Activated CD8-positive, alpha-beta memory T cell treated with anti-CD3 and anti-CD28 coated beads, Interleukin-2, amount 10 ng/mL, durations not matched to agents 7 days and 5 days (primary cell): ENCODE measurements at regions of chr20 and their contacts with region 1.

Region 1: DNA sequence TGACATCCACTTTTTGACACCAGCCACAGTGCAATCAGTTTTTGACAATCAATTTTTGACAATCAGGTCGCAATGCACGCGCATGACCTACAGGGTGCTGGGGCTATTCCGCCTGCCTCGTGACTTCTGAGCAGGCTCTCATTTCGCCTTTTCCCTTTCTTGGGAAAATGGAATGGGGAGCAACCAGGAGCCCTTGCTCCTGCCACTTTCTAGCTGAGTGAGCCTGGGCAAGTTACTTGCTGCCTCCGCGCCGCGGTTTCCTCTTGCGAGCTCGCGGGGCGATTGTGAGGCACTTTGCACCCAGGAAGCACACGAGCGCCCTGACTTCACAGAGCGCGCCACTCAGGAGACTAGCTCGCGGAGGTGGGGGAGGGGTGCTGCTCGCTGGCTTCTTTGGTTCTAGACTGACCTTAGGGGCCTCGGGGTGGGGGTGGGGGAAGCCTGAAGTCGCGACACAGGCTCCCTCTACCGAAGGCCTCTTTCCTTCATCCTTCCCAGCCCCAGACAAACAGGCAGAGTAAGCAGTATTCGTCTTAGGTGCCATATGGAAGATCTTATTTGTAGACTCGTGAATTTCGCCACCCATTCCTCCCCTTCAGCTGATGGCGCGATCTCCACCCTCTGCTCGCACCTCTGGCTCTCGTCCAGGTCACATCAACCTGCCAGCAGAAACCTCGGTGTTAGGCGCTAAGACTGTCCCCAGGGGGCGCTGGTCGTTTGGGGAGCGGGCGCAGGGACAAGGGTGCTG is 4.6 kb downstream of the TP53TG5 start:
- DNase-seq: peak; percentile 92
- ATAC-seq: peak; percentile 95
- H3K4me3 Mint-ChIP-seq: peak overlapping the region; percentile 78
- H3K27ac Mint-ChIP-seq: peak overlapping the region; percentile 90
- H3K4me1 Mint-ChIP-seq: peaks cover 27% of the 10 kb centered on the region
- H3K27me3 Mint-ChIP-seq: no peaks in the 10 kb centered on the region

Region 2: GRCh38 chr20:45300961-45301360 is 72.6 kb before region 1 on chr20:
- CTCF ChIA-PET with region 1: no interaction called
- DNase-seq: peak; percentile 75
- ATAC-seq: peak; percentile 69
- H3K4me3 Mint-ChIP-seq: no peak overlapping the region
- H3K27ac Mint-ChIP-seq: no peak overlapping the region
- H3K4me1 Mint-ChIP-seq: peaks cover 42% of the 10 kb centered on the region
- H3K27me3 Mint-ChIP-seq: peaks cover 29% of the 10 kb centered on the region

Region 3: DNA sequence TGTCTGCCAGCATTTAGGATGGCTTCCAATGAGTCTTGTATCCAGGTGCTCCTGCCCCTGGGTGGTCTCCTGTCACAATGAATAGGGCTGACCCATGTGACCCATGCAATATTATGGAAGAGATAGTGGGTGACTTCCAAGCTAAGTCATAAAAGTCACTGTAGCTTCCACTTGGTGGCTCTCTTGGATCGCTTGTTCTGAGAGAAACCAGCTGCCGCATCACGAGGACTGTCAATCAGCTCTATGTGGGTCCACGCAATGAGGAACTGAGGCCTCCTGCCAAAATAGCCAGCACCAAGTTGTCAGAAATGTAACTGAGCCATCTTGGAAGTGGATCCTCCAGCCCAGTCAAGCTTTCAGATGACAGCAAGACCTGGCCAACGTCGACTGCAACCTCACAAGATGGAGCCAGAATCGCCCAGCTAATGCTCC is 50.6 kb before region 1 on chr20:
- CTCF ChIA-PET with region 1: interaction called, 33 read pairs
- DNase-seq: no peak
- ATAC-seq: no peak
- H3K4me3 Mint-ChIP-seq: no peak overlapping the region
- H3K27ac Mint-ChIP-seq: no peak overlapping the region
- H3K4me1 Mint-ChIP-seq: peaks cover 35% of the 10 kb centered on the region
- H3K27me3 Mint-ChIP-seq: no peaks in the 10 kb centered on the region

Region 4: GRCh38 chr20:45362804-45363610 is 10.5 kb before region 1 on chr20 and contains the start of gene SYS1:
- CTCF ChIA-PET with region 1: interaction called, 127 read pairs
- DNase-seq: peak; percentile 99
- ATAC-seq: peak; percentile 92
- H3K4me3 Mint-ChIP-seq: peak within 1 kb of the TSS; percentile 100
- H3K27ac Mint-ChIP-seq: peak within 1 kb of the TSS; percentile 97
- H3K4me1 Mint-ChIP-seq: peaks cover 52% of the 10 kb centered on the region
- H3K27me3 Mint-ChIP-seq: peaks cover 3% of the 10 kb centered on the region
- total RNA-seq, gene SYS1: 19.6 to 24.9 TPM

Region 5: DNA sequence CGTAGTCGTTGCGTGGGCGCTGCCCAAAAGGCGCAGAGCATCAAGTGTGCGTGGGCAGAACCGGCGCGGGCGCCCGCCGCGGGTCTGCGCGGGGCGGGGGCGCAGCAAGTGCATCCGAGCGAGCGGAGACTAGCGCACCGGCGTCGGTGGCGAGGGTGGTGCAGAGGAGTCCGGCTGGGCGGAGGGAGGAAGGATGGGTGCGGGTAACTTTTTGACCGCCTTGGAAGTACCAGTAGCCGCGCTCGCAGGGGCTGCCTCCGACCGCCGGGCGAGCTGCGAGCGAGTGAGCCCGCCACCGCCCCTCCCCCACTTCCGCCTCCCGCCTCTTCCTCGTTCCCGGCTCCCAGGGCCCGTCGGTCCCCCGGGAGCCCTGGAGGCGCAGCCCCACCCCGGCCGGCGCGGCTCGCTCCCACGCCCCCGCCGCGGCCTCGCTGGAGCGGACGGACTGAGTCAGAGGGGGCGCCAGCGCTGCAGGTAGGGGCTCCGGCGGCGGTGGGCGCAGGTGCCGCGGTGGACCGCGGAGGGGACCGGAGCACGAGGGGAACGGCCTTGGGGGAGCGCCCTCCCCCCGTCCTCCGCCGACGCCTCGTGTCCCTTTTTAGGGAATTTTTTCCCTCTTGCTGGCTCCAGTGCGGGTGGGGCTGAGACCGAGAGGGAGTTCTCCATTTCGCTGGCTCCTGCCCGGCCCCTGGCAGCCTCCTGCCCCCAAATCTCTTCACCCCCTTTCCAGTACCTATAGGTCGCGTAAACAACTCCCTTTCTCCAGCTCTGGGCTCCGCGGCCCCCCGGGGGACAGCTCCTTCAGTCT is 32.9 kb after region 1 on chr20:
- CTCF ChIA-PET with region 1: interaction called, 56 read pairs
- DNase-seq: peak; percentile 58
- ATAC-seq: peak; percentile 65
- H3K4me3 Mint-ChIP-seq: peak overlapping the region; percentile 70
- H3K27ac Mint-ChIP-seq: no peak overlapping the region
- H3K4me1 Mint-ChIP-seq: peaks cover 7% of the 10 kb centered on the region
- H3K27me3 Mint-ChIP-seq: peaks cover 23% of the 10 kb centered on the region

Region 6: GRCh38 chr20:45436732-45437391 is 63.3 kb after region 1 on chr20:
- CTCF ChIA-PET with region 1: interaction called, 478 read pairs
- DNase-seq: peak; percentile 91
- ATAC-seq: peak; percentile 100
- H3K4me3 Mint-ChIP-seq: peak overlapping the region; percentile 81
- H3K27ac Mint-ChIP-seq: peak overlapping the region; percentile 58
- H3K4me1 Mint-ChIP-seq: peaks cover 25% of the 10 kb centered on the region
- H3K27me3 Mint-ChIP-seq: no peaks in the 10 kb centered on the region

Region 7: DNA sequence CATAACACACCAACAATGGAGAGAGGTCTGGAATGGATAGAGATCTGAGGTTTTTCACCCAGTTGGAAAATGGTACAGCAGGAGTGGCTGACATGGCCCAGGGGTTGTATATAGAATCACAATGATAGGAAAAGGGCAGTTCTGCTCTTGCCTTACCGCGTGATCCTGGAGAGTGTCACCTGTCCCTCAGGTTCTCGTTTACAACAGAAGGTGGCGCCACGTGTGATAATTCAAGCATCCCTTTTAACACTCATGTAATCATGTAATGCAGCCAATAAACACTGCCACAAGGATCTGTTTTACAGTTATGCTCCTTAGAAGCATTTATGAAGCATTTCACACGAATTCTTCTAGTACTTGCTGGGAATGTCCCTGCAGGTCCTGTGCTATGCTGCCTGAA is 83.1 kb after region 1 on chr20:
- CTCF ChIA-PET with region 1: interaction called, 15 read pairs
- DNase-seq: peak; percentile 61
- ATAC-seq: peak; percentile 33
- H3K4me3 Mint-ChIP-seq: no peak overlapping the region
- H3K27ac Mint-ChIP-seq: no peak overlapping the region
- H3K4me1 Mint-ChIP-seq: no peaks in the 10 kb centered on the region
- H3K27me3 Mint-ChIP-seq: peaks cover 18% of the 10 kb centered on the region

Region 8: DNA sequence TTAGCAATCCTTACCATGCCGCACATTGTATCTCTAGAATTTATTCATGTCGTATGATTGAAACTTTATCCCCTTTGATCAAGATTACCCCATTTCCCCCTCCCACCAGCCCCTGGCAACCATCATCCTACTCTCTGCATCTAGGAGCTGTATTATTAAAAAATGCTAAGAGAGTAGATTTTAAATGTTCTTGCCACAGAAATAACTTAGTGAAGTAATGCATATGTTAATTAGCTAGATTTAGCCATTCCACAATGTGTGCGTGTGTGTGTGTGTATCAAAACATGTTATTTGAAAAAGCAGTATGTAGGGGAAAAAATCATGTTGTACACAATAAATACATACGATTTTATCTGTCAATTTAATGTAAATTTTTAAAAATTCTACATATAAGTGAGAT is 153.8 kb after region 1 on chr20:
- CTCF ChIA-PET with region 1: no interaction called
- DNase-seq: no peak
- ATAC-seq: no peak
- H3K4me3 Mint-ChIP-seq: no peak overlapping the region
- H3K27ac Mint-ChIP-seq: no peak overlapping the region
- H3K4me1 Mint-ChIP-seq: no peaks in the 10 kb centered on the region
- H3K27me3 Mint-ChIP-seq: peaks cover 47% of the 10 kb centered on the region